H1 (cell line): ENCODE measurements at regions of chr19 and their contacts with region 1.

Region 1: GRCh38 chr19:56477429-56478338 is 539 bp upstream of the ZNF667 start:
- DNase-seq: peak; percentile 39 to 81
- H3K4me3 ChIP-seq: peak overlapping the region; percentile 74 to 98 (median 92)
- H3K27ac ChIP-seq: peak overlapping the region; percentile 72
- H3K4me1 ChIP-seq: peaks cover 0 to 4% (median 1%) of the 10 kb centered on the region in 4 experiments; a peak in 4 of 7 replicates
- H3K27me3 ChIP-seq: no peaks in the 10 kb centered on the region
- CTCF ChIP-seq: no peak
- EP300 ChIP-seq: no peak
- POLR2A ChIP-seq: no peak
- RAD21 ChIP-seq: no peak

Region 2: DNA sequence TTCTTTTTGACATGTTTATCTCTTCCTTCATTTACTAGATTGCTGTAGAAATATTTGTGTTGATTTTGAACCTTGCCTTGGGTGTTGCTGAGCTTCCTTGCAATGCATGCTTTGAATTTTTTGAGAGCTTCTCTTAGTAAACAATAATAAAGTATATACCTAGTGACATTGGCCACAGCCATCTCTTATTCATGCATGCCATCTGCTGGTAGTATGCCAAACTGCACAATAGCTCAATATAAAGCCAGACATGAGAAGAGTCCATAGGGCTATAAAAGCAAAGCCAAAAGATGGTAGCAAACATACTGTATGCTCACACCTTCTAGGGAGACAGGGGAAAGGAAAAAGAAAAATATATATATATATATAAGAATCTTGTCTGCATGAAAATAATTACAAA is 144.2 kb before region 1 on chr19:
- CTCF ChIA-PET with region 1: no interaction called
- POLR2A ChIA-PET with region 1: no interaction called
- DNase-seq: peak in 1 of 2 experiments; percentile 49
- H3K4me3 ChIP-seq: no peak overlapping the region
- H3K27ac ChIP-seq: no peak overlapping the region
- H3K4me1 ChIP-seq: no peaks in the 10 kb centered on the region
- H3K27me3 ChIP-seq: no peaks in the 10 kb centered on the region
- CTCF ChIP-seq: peak in 2 of 3 experiments; percentile 59 to 61; a peak in 3 of 4 replicates
- EP300 ChIP-seq: no peak
- POLR2A ChIP-seq: no peak
- RAD21 ChIP-seq: peak; percentile 81

Region 3: DNA sequence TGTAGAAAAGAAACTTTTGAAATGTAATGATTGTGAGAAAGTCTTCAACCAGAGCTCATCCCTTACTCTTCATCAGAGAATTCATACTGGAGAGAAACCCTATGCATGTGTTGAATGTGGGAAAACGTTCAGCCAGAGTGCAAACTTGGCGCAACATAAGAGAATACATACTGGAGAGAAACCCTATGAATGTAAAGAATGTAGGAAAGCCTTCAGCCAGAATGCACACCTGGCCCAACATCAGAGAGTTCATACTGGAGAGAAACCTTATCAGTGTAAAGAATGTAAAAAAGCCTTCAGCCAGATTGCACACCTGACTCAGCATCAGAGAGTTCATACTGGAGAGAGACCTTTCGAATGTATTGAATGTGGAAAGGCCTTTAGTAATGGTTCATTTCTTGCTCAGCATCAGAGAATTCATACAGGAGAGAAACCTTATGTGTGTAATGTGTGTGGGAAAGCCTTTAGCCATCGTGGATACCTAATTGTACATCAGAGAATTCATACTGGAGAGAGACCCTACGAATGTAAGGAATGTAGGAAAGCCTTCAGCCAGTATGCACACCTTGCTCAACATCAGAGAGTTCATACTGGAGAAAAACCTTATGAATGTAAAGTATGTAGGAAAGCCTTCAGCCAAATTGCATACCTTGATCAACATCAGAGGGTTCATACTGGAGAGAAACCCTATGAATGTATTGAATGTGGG is 54.3 kb before region 1 on chr19:
- CTCF ChIA-PET with region 1: no interaction called
- POLR2A ChIA-PET with region 1: no interaction called
- DNase-seq: no peak
- H3K4me3 ChIP-seq: no peak overlapping the region
- H3K27ac ChIP-seq: no peak overlapping the region
- H3K4me1 ChIP-seq: no peaks in the 10 kb centered on the region
- H3K27me3 ChIP-seq: no peaks in the 10 kb centered on the region
- CTCF ChIP-seq: no peak
- EP300 ChIP-seq: no peak
- POLR2A ChIP-seq: no peak
- RAD21 ChIP-seq: no peak

Region 4: DNA sequence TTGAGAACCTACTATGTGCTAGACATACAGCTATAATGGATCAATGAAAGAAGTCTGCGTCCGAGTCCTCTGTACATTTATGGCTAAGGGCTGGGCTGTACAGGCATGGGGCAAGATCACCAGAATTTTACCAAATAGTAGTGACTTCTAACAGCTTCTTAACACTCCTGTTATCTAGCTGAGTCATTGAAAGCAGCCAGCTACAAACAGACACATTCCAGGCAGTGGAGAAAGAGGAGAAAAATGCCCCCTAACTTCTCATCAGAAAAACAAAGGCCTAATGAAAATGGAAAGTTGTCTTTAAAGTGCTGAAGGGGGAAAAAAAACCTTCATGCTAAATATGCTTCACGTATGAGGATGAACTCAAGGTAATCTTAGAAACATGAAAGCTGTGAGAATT is 13.7 kb after region 1 on chr19:
- CTCF ChIA-PET with region 1: interaction called, 8 read pairs
- POLR2A ChIA-PET with region 1: interaction called, 11 read pairs
- DNase-seq: no peak
- H3K4me3 ChIP-seq: peak overlapping the region in 1 of 4 experiments; percentile 31; a peak in 1 of 8 replicates
- H3K27ac ChIP-seq: 0 out of 2 replicates have a peak overlapping the region, but pooled peaks have one; percentile 34
- H3K4me1 ChIP-seq: peaks cover 2 to 11% (median 4%) of the 10 kb centered on the region in 4 experiments; a peak in 5 of 7 replicates
- H3K27me3 ChIP-seq: no peaks in the 10 kb centered on the region
- CTCF ChIP-seq: no peak
- EP300 ChIP-seq: no peak
- POLR2A ChIP-seq: no peak
- RAD21 ChIP-seq: no peak